Endothelial cell of umbilical vein (primary cell): ENCODE measurements at regions of chr10 and their contacts with region 1.

Region 1: DNA sequence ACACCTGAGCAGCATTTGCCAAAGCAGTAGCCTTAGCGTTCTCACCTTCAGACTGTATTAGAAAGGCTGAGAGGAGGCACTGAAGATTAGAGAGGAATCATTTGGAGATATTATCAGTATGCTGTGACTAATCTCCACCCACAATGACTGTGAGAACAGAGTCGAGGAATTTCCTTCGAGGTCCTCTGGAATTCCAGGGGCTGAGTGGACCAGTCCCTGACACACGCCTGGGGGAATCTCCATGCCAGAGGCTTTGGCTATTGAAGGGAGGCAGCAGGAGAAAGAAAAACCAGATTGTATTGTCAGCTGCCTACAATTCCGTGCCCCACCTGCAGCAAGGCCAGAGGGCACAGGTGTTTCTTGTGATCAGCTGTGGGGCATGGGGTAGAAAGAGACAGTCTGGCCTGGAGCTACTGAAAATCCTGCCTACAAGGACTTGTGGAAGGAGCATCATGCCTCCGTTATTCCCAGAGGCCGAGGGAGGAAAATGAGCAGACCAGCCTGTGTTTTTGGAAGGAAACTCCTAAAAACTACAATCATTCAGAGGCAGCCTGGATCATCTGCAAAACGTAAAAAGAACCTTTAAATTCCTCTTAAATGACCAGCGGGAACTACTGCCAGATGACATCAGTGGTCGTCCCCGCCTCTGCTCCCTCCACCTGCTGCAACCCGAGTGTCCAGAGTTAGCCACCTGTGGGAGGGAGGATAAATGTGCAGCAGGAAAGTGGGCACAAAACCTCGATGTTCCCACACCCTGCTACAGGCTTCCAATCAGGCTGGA is 25.3 kb upstream of the ANK3 start:
- DNase-seq: peak; percentile 82
- H3K4me3 ChIP-seq: peak overlapping the region in 1 of 3 experiments; percentile 7
- H3K27ac ChIP-seq: peak overlapping the region; percentile 77
- H3K4me1 ChIP-seq: peaks cover 21% of the 10 kb centered on the region
- H3K27me3 ChIP-seq: no peaks in the 10 kb centered on the region
- CTCF ChIP-seq: no peak
- POLR2A ChIP-seq: no peak

Region 2: GRCh38 chr10:59808896-59809643 is 605.9 kb before region 1 on chr10:
- CTCF ChIA-PET with region 1: no interaction called
- POLR2A ChIA-PET with region 1: no interaction called
- dilution Hi-C with region 1: no loop called
- intact Hi-C with region 1: no loop called
- DNase-seq: peak; percentile 71
- H3K4me3 ChIP-seq: no peak overlapping the region
- H3K27ac ChIP-seq: no peak overlapping the region
- H3K4me1 ChIP-seq: no peaks in the 10 kb centered on the region
- H3K27me3 ChIP-seq: no peaks in the 10 kb centered on the region
- CTCF ChIP-seq: peak; percentile 70 to 82
- POLR2A ChIP-seq: no peak

Region 3: DNA sequence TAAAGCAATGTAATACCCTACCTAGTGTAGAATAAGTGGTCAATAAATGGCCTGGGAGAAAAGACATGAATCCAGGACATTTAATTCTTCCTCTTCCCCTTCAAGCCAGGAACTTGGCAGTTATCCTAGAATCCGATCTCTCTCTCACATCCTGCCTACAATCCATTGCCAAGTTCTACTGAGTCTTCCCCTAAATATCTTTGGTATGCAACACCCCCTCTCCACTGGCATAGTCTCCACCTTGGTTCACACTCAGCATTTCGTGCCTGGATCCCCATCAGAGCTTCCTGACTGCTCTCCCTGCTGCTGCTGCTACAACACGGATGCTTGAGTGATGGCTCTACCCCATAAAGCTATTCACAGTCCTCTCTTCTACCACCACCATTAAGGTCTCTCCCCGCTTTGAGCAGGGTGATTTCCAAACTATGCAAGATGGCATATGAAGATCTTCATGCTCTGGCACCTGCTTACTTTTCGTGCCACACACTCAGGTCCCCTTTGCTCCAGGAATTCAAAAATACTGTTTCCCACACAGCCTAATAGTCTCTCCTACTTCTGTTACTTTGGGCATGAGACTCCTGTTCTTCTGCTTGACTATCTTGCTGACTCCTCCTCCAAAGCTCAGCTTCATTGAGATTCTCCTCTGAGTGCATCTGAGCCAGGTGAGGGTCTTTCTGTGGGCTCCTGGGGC is 30.1 kb before region 1 on chr10:
- CTCF ChIA-PET with region 1: interaction called, 6 read pairs
- POLR2A ChIA-PET with region 1: no interaction called
- dilution Hi-C with region 1: no loop called
- intact Hi-C with region 1: loop called (anchors 1 kb)
- DNase-seq: peak; percentile 77
- H3K4me3 ChIP-seq: no peak overlapping the region
- H3K27ac ChIP-seq: peak overlapping the region; percentile 40
- H3K4me1 ChIP-seq: peaks cover 31% of the 10 kb centered on the region
- H3K27me3 ChIP-seq: no peaks in the 10 kb centered on the region
- CTCF ChIP-seq: no peak
- POLR2A ChIP-seq: peak; percentile 71

Region 4: GRCh38 chr10:60536529-60537114 is 121.6 kb after region 1 on chr10:
- CTCF ChIA-PET with region 1: no interaction called
- POLR2A ChIA-PET with region 1: no interaction called
- dilution Hi-C with region 1: no loop called
- intact Hi-C with region 1: no loop called
- DNase-seq: no peak
- H3K4me3 ChIP-seq: no peak overlapping the region
- H3K27ac ChIP-seq: no peak overlapping the region
- H3K4me1 ChIP-seq: no peaks in the 10 kb centered on the region
- H3K27me3 ChIP-seq: peaks cover 5 to 6% of the 10 kb centered on the region in 2 experiments
- CTCF ChIP-seq: no peak
- POLR2A ChIP-seq: no peak